ENCODE measurements at regions of chr11 and their contacts with region 1.

Region 1: DNA sequence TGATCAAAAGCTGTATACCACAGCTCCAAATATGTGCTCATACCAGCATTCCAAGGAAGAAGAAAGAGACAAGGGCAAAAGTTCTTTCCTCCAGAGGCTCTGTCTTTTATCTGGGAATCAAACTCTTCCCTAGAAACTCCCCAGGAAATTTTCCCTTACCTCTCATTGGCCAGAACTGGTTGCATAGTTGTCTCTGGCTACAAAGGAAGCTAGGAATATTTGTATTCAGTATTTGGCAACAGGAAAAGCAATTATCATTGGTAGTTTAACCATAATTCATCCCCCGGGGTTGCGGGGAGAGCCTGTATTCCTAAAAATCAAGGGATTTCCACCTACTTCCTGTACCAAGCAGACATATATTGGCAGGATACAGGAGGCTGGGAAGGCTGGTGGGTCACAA is 10.5 kb upstream of the ZFTA start:
- H3K4me3 ChIP-seq: no peak overlapping the region
- H3K27ac ChIP-seq: no peak overlapping the region
- H3K4me1 ChIP-seq: no peaks in the 10 kb centered on the region
- CTCF ChIP-seq: no peak

Region 2: GRCh38 chr11:63768237-63769043 is 10.6 kb before region 1 on chr11 and contains the start of gene ZFTA:
- CTCF ChIA-PET with region 1: interaction called, 11 read pairs
- POLR2A ChIA-PET with region 1: interaction called, 5 read pairs
- H3K4me3 ChIP-seq: peak within 1 kb of the TSS; percentile 51
- H3K27ac ChIP-seq: peak within 1 kb of the TSS; percentile 71; the same call in 1 of the 2 replicates
- H3K4me1 ChIP-seq: no peaks in the 10 kb centered on the region
- CTCF ChIP-seq: no peak

Measured in HEK293 (cell line).